ENCODE measurements at regions of chr11 and their contacts with region 1.

Region 1: GRCh38 chr11:126211235-126212088 is at the starts of genes FAM118B and RPUSD4:
- DNase-seq: peak; percentile 98 to 99
- H3K4me3 ChIP-seq: peak within 1 kb of the TSS; percentile 60 to 91 (median 76)
- H3K27ac ChIP-seq: peak within 1 kb of the TSS in 1 of 3 donors; percentile 36
- H3K4me1 ChIP-seq: peaks cover 17 to 25% of the 10 kb centered on the region in 2 donors
- H3K27me3 ChIP-seq: no peaks in the 10 kb centered on the region
- CTCF ChIP-seq: no peak
- POLR2A ChIP-seq: peak in 1 of 2 donors; percentile 85
- total RNA-seq, gene FAM118B: 21.7 to 25.0 (median 23.3) TPM
- total RNA-seq, gene RPUSD4: 10.5 to 17.6 (median 14.6) TPM

Region 2: DNA sequence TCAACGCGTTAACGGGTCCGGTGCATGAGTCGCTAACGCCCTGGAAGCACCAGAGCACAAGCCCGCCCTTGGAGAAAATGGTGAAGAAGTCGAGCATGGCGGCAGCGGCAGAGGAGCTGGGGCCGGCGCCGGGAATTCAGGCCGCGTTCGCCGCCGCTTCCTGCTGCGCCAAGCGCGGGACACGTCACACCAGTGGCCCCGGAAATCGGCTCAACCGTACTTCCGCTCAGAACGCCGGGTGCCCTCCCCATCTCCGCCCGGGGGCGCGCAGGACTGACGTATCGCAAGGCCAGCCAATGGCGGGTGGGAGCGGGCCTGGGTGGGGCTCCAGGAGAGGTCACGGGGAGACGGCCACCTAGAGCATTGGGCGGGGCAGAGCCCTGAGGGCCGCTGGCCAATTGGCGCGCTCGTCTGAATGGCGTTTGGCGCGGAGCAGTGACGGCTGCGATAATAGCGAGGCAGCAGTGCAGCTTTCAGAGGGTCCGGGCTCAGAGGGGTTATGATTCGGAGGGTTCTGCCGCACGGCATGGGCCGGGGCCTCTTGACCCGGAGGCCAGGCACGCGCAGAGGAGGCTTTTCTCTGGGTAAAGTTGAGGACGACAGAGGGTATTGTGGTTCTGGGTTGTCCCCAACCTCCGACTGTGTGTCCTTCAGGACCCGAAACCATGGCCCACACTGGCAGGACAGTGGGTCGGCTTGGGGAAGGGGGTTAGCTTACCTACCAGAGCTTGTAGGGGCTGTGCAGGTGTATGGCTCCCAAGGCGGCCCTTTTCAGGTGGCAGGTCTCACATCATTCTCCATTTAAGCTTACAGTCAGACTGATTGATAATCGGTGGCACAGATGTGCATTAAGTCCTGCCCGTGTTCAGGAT is 57.5 kb after region 1 on chr11 and contains the starts of genes FOXRED1 and SRPRA:
- intact Hi-C with region 1: loop called (anchors 5 kb)
- DNase-seq: peak; percentile 100
- H3K4me3 ChIP-seq: peak within 1 kb of the TSS; percentile 21 to 83 (median 74)
- H3K27ac ChIP-seq: peak within 1 kb of the TSS; percentile 69 to 90 (median 83)
- H3K4me1 ChIP-seq: peaks cover 8 to 11% of the 10 kb centered on the region in 2 donors
- H3K27me3 ChIP-seq: no peaks in the 10 kb centered on the region
- CTCF ChIP-seq: peak in 1 of 6 experiments; percentile 9
- POLR2A ChIP-seq: peak in 1 of 2 donors; percentile 85
- total RNA-seq, gene FOXRED1: 13.3 to 25.8 (median 20.2) TPM
- total RNA-seq, gene SRPRA: 95.3 to 153 (median 125) TPM

Measured in thyroid gland (tissue), 4 donors.